ENCODE measurements at regions of chr10 and their contacts with region 1.

Region 1: DNA sequence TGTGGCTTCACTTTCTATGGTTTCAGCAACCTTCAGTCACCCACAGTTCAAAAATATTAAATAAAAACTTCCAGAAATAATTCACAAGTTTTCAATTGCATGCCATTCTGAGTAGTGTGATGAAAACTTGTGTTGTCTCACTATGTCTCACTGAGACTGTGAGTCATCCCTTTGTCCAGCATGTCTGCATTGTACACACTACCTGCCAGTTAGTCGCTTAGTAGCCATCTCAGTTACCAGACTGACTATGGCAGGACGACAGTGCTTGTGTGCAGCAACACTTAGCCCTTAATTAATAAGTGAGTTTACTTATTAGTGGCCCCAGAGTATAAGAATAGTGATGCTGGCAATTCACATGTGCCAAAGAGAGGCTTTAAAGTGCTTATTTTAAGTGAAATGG is 22.5 kb downstream of the CCDC186 start:
- DNase-seq: peak; percentile 94
- H3K4me3 ChIP-seq: no peak overlapping the region
- H3K27ac ChIP-seq: peak overlapping the region; percentile 94
- H3K4me1 ChIP-seq: peaks cover 17% of the 10 kb centered on the region
- H3K27me3 ChIP-seq: no peaks in the 10 kb centered on the region
- CTCF ChIP-seq: no peak

Region 2: DNA sequence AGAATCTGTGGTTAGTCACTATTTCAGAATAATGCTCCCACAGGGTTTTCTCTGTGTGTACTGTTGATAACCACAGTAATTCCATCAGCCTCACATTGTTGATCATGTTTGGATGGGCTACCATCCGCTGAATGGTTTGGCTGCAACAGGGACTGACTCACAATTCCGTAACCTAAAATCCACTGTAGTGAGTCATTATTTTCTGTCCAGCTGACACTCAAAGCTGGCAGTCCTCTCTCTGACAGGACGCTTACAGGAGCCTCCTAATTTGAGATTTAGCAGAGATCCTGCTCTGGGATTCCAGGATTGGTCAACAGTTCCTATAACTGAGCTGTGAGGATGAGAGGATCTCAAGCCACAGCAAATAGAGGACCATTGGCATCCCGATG is 120.3 kb after region 1 on chr10:
- CTCF ChIA-PET with region 1: no interaction called
- dilution Hi-C with region 1: no loop called
- in situ Hi-C with region 1: no loop called
- intact Hi-C with region 1: loop called (anchors 5 kb)
- DNase-seq: peak; percentile 96
- H3K4me3 ChIP-seq: no peak overlapping the region
- H3K27ac ChIP-seq: peak overlapping the region; percentile 58
- H3K4me1 ChIP-seq: peaks cover 28% of the 10 kb centered on the region
- H3K27me3 ChIP-seq: no peaks in the 10 kb centered on the region
- CTCF ChIP-seq: no peak